ENCODE measurements at regions of chr17 and their contacts with region 1.

Region 1: DNA sequence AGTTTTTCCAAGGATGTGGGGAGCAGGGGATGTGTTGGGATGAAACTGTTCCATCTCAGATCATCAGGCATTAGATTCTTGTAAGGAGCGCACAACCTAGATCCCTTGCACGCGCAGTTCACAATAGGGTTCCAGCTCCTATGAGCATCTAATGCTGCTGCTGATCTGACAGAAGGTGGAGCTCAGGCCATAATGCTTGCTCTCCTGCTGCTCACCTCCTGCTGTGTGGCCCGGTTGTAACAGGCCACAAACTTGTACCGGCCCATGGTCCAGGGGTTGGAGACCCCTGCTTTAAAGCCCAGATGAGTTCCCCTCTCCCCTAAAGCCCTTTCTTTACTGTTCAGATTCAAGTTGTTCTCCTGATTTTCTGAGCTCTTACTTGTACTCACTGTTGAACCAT is 44.8 kb downstream of the RNF135 start:
- DNase-seq: no peak
- H3K4me3 ChIP-seq: no peak overlapping the region
- H3K27ac ChIP-seq: peak overlapping the region in 1 of 2 donors; percentile 3
- H3K4me1 ChIP-seq: peaks cover 0 to 12% of the 10 kb centered on the region in 2 donors
- H3K27me3 ChIP-seq: no peaks in the 10 kb centered on the region
- CTCF ChIP-seq: no peak

Region 2: GRCh38 chr17:31094600-31095238 is 79.1 kb after region 1 on chr17 and contains the start of gene NF1:
- intact Hi-C with region 1: loop called (anchors 5 kb)
- DNase-seq: peak; percentile 87 to 98
- H3K4me3 ChIP-seq: peak within 1 kb of the TSS; percentile 78 to 99
- H3K27ac ChIP-seq: peak within 1 kb of the TSS; percentile 93 to 99
- H3K4me1 ChIP-seq: peaks cover 0 to 5% of the 10 kb centered on the region in 2 donors
- H3K27me3 ChIP-seq: no peaks in the 10 kb centered on the region
- CTCF ChIP-seq: no peak
- total RNA-seq, gene NF1: 25.0 TPM